Endothelial cell of umbilical vein (primary cell): ENCODE measurements at regions of chr3 and their contacts with region 1.

Region 1: GRCh38 chr3:57555738-57556458 is at the start of gene PDE12:
- DNase-seq: peak; percentile 89
- H3K4me3 ChIP-seq: peak within 1 kb of the TSS; percentile 44 to 84 (median 48)
- H3K27ac ChIP-seq: peak within 1 kb of the TSS; percentile 81
- H3K4me1 ChIP-seq: peaks cover 16% of the 10 kb centered on the region
- H3K27me3 ChIP-seq: no peaks in the 10 kb centered on the region
- CTCF ChIP-seq: no peak
- POLR2A ChIP-seq: peak; percentile 90
- total RNA-seq, gene PDE12: 19.0 and 20.4 TPM in 2 replicates

Region 2: DNA sequence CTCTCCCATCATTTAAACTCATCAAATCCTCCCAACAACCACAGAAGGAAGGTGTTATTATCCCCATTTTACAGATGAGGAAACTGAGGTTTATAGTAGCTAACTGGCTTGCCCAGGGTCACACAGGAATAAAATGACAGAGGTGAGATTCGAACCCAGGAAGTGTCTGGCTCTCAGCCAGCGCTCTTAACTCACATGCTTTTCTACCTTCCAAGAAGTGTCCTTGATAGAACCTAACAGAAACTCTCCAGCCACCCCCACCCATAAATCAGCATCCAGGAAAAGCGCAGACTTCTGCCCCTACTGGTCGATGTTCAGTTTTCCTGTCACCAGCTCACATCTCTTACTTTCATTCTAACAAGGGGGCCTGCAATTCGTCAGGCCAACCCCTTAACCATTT is 443.7 kb before region 1 on chr3:
- CTCF ChIA-PET with region 1: no interaction called
- POLR2A ChIA-PET with region 1: no interaction called
- dilution Hi-C with region 1: no loop called
- intact Hi-C with region 1: no loop called
- DNase-seq: no peak
- H3K4me3 ChIP-seq: no peak overlapping the region
- H3K27ac ChIP-seq: no peak overlapping the region
- H3K4me1 ChIP-seq: no peaks in the 10 kb centered on the region
- H3K27me3 ChIP-seq: peaks cover 7 to 8% of the 10 kb centered on the region in 2 experiments
- CTCF ChIP-seq: peak; percentile 31
- POLR2A ChIP-seq: no peak

Region 3: DNA sequence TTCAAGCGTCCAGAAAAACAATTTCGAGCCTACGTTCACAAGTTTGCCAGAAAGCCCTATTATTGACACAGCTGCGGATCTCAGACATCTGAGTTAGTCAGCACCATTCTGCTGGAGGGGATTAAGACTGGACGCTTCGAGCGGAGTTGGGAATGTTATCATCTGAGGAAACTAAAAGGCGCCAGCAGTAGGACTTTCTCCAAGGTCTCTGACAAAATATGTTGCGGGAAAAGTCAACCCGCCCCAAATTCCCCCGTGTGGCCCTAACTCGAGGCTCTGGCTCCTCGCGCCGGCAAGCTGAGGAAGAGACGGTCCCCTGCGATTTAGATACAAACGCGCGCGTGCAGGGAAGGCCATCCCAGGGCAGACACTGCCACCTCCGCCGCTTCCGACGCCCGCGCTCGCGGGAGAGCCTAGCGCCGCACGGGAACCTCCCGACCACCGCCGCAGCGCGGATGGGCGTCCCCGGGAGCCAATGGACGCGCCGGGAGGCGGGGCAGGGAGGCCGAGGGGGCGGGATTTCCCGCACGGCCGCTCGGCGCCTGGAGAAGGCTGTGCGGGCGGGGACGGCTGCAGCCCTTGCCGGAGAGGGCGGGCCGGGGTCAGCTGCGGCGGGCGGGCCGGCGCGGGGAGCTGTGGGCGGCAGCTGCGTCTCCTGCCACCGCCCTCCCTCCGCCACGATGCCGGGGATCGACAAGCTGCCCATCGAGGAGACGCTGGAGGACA is 328.5 kb before region 1 on chr3 and contains the start of gene APPL1:
- CTCF ChIA-PET with region 1: no interaction called
- POLR2A ChIA-PET with region 1: no interaction called
- dilution Hi-C with region 1: no loop called
- intact Hi-C with region 1: loop called (anchors 2 kb)
- DNase-seq: peak; percentile 94
- H3K4me3 ChIP-seq: peak within 1 kb of the TSS; percentile 85 to 98 (median 88)
- H3K27ac ChIP-seq: peak within 1 kb of the TSS; percentile 75
- H3K4me1 ChIP-seq: peaks cover 18% of the 10 kb centered on the region
- H3K27me3 ChIP-seq: no peaks in the 10 kb centered on the region
- CTCF ChIP-seq: no peak
- POLR2A ChIP-seq: peak; percentile 84
- total RNA-seq, gene APPL1: 28.8 and 29.7 TPM in 2 replicates

Region 4: GRCh38 chr3:57382933-57383332 is 173.0 kb before region 1 on chr3:
- CTCF ChIA-PET with region 1: no interaction called
- POLR2A ChIA-PET with region 1: no interaction called
- dilution Hi-C with region 1: no loop called
- intact Hi-C with region 1: no loop called
- DNase-seq: no peak
- H3K4me3 ChIP-seq: no peak overlapping the region
- H3K27ac ChIP-seq: no peak overlapping the region
- H3K4me1 ChIP-seq: no peaks in the 10 kb centered on the region
- H3K27me3 ChIP-seq: peaks cover 2 to 4% of the 10 kb centered on the region in 2 experiments
- CTCF ChIP-seq: no peak
- POLR2A ChIP-seq: no peak

Region 5: GRCh38 chr3:57484563-57484962 is 71.3 kb before region 1 on chr3:
- CTCF ChIA-PET with region 1: no interaction called
- POLR2A ChIA-PET with region 1: no interaction called
- dilution Hi-C with region 1: no loop called
- intact Hi-C with region 1: loop called (anchors 2 kb)
- DNase-seq: no peak
- H3K4me3 ChIP-seq: no peak overlapping the region
- H3K27ac ChIP-seq: no peak overlapping the region
- H3K4me1 ChIP-seq: no peaks in the 10 kb centered on the region
- H3K27me3 ChIP-seq: no peaks in the 10 kb centered on the region
- CTCF ChIP-seq: no peak
- POLR2A ChIP-seq: no peak

Region 6: DNA sequence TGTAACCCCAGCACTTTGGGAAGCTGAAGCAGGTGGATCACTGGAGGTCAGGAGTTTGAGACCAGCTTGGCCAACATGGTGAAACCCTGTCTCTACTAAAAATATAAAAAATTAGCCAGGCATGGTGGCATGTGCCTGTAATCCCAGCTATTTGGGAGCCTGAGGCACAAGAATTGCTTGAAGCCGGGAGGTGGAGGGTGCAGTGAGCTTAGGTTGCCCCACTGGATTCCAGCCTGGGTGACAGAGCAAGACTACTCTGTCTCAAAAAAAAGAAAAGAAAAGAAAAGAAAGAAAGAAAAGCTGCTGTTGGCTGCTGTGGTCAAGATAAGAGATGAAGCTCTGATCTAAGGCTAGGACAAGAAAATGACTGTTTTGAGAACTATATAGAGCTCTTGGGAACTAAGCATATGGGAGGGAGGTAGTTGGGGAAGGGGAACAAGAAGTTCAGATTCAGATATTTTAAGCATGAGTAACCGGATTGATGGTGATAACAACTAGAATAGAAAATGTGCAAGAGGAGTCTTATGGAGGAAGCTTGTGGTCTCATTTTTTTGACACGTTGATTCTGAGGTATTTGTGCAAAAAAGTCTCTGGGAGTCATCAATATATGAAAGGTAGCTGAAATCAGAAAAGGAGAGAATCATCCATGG is 37.5 kb before region 1 on chr3:
- CTCF ChIA-PET with region 1: interaction called, 3 read pairs
- POLR2A ChIA-PET with region 1: interaction called, 5 read pairs
- dilution Hi-C with region 1: no loop called
- intact Hi-C with region 1: loop called (anchors 2 kb)
- DNase-seq: peak; percentile 65
- H3K4me3 ChIP-seq: peak overlapping the region in 1 of 3 experiments; percentile 37
- H3K27ac ChIP-seq: peak overlapping the region; percentile 81
- H3K4me1 ChIP-seq: peaks cover 21% of the 10 kb centered on the region
- H3K27me3 ChIP-seq: no peaks in the 10 kb centered on the region
- CTCF ChIP-seq: no peak
- POLR2A ChIP-seq: no peak

Region 7: DNA sequence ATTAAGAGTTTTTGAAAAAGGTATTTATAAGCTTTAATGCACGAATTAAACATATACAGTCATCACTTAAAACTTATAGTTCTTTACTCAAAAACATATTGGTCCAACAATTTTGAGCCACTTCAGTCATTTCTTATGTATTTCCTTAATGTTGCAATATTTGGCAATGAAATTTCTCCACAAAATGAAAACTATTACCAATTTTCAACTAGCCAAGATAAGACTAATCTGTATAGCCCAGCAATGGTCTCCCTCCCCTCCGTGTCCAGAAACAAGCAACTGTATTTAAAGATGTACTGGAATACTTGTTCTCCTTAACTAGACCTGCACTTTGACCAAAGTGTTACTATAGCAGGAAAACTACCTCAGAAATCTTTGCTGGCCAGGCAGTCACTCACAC is 32.0 kb after region 1 on chr3:
- CTCF ChIA-PET with region 1: no interaction called
- POLR2A ChIA-PET with region 1: no interaction called
- dilution Hi-C with region 1: no loop called
- intact Hi-C with region 1: no loop called
- DNase-seq: no peak
- H3K4me3 ChIP-seq: no peak overlapping the region
- H3K27ac ChIP-seq: no peak overlapping the region
- H3K4me1 ChIP-seq: peaks cover 3% of the 10 kb centered on the region
- H3K27me3 ChIP-seq: no peaks in the 10 kb centered on the region
- CTCF ChIP-seq: no peak
- POLR2A ChIP-seq: no peak